ENCODE measurements at regions of chr3 and their contacts with region 1.

Region 1: DNA sequence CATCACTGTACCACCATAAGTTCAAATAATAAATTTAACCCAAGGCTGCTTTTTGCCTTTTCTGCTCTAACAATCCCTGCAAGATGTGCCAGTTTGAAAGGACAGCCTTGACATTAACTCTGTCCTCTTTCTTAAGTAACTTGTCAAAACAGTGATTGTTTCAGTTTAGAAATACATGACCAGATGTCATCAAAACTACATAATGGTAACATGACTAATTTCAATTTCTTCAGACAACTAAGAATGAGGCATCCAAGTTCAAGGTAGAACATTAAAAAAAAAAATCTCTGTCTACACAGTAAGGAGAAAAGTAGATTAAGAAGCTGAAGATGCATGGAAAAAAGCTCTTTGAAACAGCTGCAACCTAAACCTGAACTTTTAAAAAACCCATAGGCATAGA is 47.4 kb downstream of the SHQ1 start:
- DNase-seq: no peak
- ATAC-seq: no peak
- H3K4me3 ChIP-seq: no peak overlapping the region
- H3K4me3 Mint-ChIP-seq: no peak overlapping the region
- H3K27ac ChIP-seq: no peak overlapping the region
- H3K27ac Mint-ChIP-seq: no peak overlapping the region
- H3K4me1 ChIP-seq: no peaks in the 10 kb centered on the region
- H3K4me1 Mint-ChIP-seq: peaks cover 19% of the 10 kb centered on the region
- H3K27me3 ChIP-seq: no peaks in the 10 kb centered on the region
- H3K27me3 Mint-ChIP-seq: no peaks in the 10 kb centered on the region
- CTCF ChIP-seq: no peak

Region 2: DNA sequence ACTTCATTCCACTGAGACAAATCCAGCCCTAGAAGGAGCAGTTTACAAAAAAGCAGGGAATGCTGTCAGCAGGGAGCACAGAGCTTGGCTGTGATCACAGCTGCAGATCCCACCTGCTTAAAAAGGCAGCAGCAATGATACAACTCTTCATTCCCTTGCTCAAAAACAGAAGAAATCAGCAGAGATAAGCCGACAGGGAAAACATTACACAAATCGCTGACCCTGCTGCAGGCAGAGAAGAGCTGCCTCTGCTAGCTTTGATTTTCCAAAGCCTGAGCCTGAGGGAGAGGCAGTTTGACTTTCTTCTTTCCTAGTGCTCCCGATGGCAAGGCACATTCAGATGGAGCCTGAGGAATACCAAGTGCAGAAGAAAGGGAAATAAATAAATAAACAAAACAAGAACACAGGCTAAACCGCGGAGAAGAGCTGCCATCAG is 32.8 kb before region 1 on chr3:
- CTCF ChIA-PET with region 1: no interaction called
- POLR2A ChIA-PET with region 1: no interaction called
- intact Hi-C with region 1: loop called in 1 of 2 experiments (anchors 5 kb)
- DNase-seq: no peak
- ATAC-seq: no peak
- H3K4me3 ChIP-seq: no peak overlapping the region
- H3K4me3 Mint-ChIP-seq: no peak overlapping the region
- H3K27ac ChIP-seq: no peak overlapping the region
- H3K27ac Mint-ChIP-seq: no peak overlapping the region
- H3K4me1 ChIP-seq: no peaks in the 10 kb centered on the region
- H3K4me1 Mint-ChIP-seq: peaks cover 26% of the 10 kb centered on the region
- H3K27me3 ChIP-seq: no peaks in the 10 kb centered on the region
- H3K27me3 Mint-ChIP-seq: no peaks in the 10 kb centered on the region
- CTCF ChIP-seq: no peak

Measured in CD4-positive, alpha-beta T cell (primary cell).